ENCODE measurements at regions of chr9 and their contacts with region 1.

Region 1: DNA sequence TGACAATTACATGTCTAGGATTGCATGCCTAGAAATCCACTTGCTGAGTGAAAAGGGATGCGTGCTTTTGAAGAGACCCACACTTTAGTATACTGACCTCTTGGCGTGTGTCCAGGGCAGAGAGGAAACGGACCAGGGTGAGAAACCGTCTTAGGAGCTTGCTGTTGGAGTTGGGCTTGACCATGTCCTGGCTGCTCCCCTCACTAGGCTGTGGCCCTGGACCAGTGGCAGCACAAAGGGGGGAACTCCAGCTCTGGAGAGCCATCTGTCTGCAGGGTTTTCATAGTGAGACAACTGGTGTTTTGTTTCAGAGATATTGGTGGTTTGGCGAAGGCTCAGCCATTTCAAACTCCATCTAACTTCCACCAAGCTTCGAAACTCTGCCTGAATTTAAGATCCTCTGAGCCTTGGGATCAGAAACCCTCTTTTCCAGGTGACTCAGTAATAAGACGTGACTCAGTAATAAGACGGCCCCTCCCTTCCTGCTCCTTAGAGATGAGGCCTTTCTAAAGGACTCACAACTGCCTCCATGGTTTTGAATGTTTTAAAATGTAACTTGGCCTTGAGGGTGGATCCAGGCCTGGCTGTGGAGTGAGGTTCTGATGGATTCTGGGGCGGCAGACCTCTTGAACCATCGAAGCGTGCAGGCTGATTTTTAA is 165.8 kb downstream of the MELK start:
- DNase-seq: no peak
- ATAC-seq: no peak
- H3K4me3 ChIP-seq: no peak overlapping the region
- H3K27ac ChIP-seq: no peak overlapping the region
- H3K4me1 ChIP-seq: peaks cover 0 to 7% (median 0%) of the 10 kb centered on the region in 9 donors
- H3K27me3 ChIP-seq: peaks cover 0 to 83% (median 70%) of the 10 kb centered on the region in 7 donors
- CTCF ChIP-seq: no peak

Region 2: GRCh38 chr9:36436909-36437308 is 301.5 kb before region 1 on chr9:
- intact Hi-C with region 1: loop called in 1 of 10 experiments (anchors 10 kb)
- DNase-seq: peak; percentile 24 to 62
- ATAC-seq: peak in 5 of 8 donors; percentile 67 to 85 (median 75)
- H3K4me3 ChIP-seq: no peak overlapping the region
- H3K27ac ChIP-seq: no peak overlapping the region
- H3K4me1 ChIP-seq: peaks cover 0 to 30% (median 10%) of the 10 kb centered on the region in 9 donors
- H3K27me3 ChIP-seq: no peaks in the 10 kb centered on the region
- CTCF ChIP-seq: no peak

Region 3: DNA sequence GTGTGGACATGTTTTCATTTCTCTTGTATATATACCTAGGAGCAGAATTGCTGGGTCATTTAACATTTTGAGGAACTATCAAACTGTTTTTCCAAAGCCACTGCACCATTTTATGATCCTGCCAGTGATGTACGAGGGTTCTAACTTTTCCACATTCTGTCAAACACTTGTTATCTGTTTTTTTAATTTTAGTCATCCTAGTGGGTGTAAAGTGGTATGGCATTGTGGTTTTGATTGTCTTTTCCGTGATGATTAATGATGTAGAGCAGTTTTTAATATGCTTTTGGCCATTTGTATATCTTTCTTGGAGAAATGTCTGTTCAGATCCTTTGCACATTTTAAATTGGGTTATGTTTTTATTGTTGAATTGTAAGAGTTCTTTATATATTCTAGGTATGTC is 58.7 kb before region 1 on chr9:
- intact Hi-C with region 1: no loop called
- DNase-seq: no peak
- ATAC-seq: no peak
- H3K4me3 ChIP-seq: no peak overlapping the region
- H3K27ac ChIP-seq: no peak overlapping the region
- H3K4me1 ChIP-seq: no peaks in the 10 kb centered on the region
- H3K27me3 ChIP-seq: peaks cover 0 to 1% (median 0%) of the 10 kb centered on the region in 7 donors
- CTCF ChIP-seq: no peak

Measured in heart right ventricle (tissue), 16 donors.